WTC11 (cell line): ENCODE measurements at regions of chr19 and their contacts with region 1.

Region 1: DNA sequence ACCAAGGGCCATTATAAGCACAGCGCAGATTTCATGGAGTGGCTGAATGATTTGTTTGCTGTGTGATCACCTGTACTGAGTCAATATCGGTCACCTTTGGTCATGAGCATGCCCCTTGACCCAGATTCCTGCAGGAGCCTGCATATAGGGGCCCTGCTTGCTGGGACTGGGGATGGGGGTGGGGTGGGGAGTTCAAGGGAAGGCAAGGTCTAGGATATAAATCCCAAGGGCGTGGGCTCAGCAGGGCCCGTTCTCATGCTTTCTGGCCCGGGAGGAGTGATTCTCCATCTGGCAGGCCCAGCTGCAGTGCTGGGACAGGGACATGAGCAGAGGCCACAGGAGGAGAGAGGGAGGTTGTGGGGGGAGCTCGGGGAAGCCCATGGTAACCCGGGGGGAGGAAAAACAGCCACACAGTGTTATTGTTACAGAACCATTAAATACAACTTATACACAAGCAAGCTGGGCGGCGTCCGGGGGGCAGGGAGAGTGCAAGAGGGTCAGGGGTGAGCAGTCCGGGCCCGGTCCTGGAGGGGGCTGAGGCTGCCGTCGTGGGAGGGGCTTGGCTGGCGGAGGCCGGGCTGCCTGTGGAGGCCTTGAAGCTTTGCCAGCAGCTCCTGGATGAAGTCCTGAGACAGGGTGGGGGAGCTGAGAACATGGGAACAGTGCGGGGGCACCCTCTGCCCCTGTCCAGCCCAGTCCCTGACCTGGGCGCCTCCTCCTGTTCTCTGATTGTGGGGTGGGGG is 5.2 kb downstream of the PPP1R14A start:
- DNase-seq: peak; percentile 38
- ATAC-seq: peak; percentile 45
- H3K4me3 Mint-ChIP-seq: peak overlapping the region; percentile 63
- H3K27ac Mint-ChIP-seq: peak overlapping the region; percentile 75
- H3K4me1 Mint-ChIP-seq: peaks cover 46% of the 10 kb centered on the region
- H3K27me3 Mint-ChIP-seq: peaks cover 8% of the 10 kb centered on the region
- CTCF ChIP-seq: no peak

Region 2: DNA sequence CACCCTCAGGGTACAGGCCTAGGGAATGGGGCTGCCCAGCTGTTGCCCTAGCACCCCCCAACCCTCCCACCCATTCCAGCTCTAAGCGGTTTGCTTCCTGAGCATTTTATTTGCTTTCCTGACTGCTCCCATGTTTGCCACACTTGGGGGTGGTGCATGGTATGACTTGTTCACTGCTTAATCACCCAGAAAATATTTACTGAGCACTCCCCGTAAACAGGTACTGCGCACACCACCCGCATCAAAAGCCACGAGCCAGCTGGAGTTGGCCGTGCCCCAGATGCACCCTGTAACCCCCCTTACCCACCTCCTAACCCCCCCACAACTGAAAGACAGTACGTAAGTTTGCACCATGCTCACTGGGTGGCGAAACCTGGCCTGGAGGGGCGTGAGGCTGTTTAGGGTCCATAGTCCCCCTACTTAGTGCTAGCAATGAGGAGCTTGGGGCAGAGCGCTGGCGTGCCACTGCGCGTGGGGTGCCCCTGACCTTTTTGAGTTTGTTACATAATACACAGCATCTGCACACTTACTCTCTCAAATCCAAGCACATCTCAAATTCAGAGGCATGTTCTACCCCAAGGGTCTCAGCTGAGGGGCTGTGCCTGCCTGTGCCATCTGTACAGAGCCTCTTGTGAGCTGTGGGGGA is 56.8 kb before region 1 on chr19:
- CTCF ChIA-PET with region 1: no interaction called
- POLR2A ChIA-PET with region 1: no interaction called
- DNase-seq: no peak
- ATAC-seq: no peak
- H3K4me3 Mint-ChIP-seq: no peak overlapping the region
- H3K27ac Mint-ChIP-seq: no peak overlapping the region
- H3K4me1 Mint-ChIP-seq: no peaks in the 10 kb centered on the region
- H3K27me3 Mint-ChIP-seq: no peaks in the 10 kb centered on the region
- CTCF ChIP-seq: no peak

Region 3: GRCh38 chr19:38263689-38264485 is 12.9 kb after region 1 on chr19:
- CTCF ChIA-PET with region 1: interaction called, 17 read pairs
- POLR2A ChIA-PET with region 1: interaction called, 20 read pairs
- DNase-seq: peak; percentile 97
- ATAC-seq: peak; percentile 89
- H3K4me3 Mint-ChIP-seq: peak overlapping the region; percentile 63
- H3K27ac Mint-ChIP-seq: peak overlapping the region; percentile 97
- H3K4me1 Mint-ChIP-seq: peaks cover 51% of the 10 kb centered on the region
- H3K27me3 Mint-ChIP-seq: no peaks in the 10 kb centered on the region
- CTCF ChIP-seq: no peak